GM10248 (cell line): ENCODE measurements at regions of chr19 and their contacts with region 1.

Region 1: GRCh38 chr19:10000171-10000826 is 10.0 kb downstream of the COL5A3 start:
- DNase-seq: peak; percentile 86
- CTCF ChIP-seq: peak; percentile 76

Region 2: DNA sequence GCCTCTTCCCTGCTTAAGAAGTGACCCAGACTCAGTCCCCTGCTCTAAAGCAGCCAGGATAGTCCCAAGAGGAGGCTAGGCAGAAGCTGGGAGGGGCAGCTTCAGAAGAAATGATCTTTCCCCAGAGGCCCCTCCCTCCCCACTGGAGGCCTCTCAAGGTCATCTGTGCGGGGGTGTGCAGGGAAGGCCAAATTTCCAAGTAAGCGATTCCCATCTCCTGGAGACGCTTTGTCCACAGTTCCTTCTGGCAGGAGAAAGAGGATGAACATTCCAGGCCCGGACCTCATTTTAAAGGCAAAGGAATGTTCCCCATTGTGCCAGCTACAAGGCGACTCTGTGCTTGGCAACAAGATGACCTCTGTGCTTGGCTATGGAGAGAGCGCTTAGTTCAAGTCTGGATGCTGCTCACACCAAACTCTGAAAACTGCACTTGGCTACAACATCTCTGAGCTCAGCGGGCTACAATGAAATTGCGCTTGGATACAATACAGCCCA is 13.5 kb before region 1 on chr19:
- CTCF ChIA-PET with region 1: interaction called, 29 read pairs
- POLR2A ChIA-PET with region 1: no interaction called
- DNase-seq: no peak
- CTCF ChIP-seq: no peak

Region 3: GRCh38 chr19:10018263-10018662 is 18.0 kb after region 1 on chr19:
- CTCF ChIA-PET with region 1: interaction called, 16 read pairs
- POLR2A ChIA-PET with region 1: interaction called, 4 read pairs
- DNase-seq: no peak
- CTCF ChIP-seq: no peak

Region 4: DNA sequence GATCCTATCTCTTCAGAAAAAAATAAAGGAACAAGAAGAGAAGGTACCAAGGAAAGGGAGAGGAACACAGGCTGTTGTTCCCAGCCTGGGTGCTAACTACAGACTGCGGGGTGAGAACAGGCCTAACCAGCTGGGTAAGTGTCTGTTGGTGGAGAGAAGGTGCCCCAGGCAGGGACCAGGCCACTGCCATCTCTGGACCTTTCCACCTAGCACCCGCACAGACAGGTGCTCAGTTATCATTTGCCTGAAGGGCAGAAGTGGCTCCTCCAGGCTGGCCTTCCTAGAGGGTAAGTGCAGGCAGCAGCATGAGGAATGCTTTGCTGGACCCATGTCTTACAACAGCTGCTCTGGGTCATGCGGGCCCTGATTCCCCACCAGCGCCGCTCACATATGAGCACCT is 184.3 kb after region 1 on chr19:
- CTCF ChIA-PET with region 1: no interaction called
- POLR2A ChIA-PET with region 1: no interaction called
- DNase-seq: no peak
- CTCF ChIP-seq: no peak

Region 5: DNA sequence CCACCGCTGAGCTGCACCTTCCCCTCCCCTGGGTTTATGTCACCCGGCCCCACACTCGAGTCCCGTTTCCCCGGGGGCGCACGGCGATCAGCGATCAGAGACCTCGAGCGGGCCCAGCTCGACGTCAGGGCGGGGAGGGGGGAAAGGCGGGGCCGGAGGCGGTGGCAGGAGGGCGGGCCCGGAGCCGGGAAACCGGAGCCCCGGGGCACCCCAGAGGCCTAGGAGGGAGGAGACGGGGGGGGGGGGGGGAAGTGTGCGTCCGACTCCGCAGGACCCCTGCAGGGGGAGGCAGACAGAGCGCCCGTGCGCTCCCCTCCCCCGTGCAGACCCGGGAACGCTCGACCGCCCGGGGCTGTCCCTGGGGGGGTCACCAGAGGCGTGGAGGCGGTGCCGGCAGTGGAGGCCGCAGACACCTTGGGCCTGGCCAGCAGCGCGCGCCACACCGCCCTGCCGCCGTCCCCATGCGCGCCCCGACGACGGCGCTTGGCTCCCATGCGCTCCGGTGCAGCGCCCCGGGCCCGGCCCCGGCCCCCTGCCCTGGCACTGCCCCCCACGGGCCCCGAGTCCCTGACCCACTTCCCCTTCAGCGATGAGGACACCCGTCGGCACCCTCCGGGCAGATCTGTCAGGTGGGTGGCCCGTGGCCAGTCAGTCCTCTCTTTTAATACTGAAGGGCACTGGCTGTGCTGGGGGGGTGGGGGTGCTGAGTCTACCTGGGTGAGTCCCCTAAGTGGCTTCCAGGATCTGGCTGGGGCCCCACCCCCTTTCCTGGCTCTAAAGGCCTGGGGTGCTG is 431.8 kb after region 1 on chr19:
- CTCF ChIA-PET with region 1: no interaction called
- POLR2A ChIA-PET with region 1: no interaction called
- DNase-seq: peak; percentile 83
- CTCF ChIP-seq: no peak